ENCODE measurements at regions of chr2 and their contacts with region 1.

Region 1: DNA sequence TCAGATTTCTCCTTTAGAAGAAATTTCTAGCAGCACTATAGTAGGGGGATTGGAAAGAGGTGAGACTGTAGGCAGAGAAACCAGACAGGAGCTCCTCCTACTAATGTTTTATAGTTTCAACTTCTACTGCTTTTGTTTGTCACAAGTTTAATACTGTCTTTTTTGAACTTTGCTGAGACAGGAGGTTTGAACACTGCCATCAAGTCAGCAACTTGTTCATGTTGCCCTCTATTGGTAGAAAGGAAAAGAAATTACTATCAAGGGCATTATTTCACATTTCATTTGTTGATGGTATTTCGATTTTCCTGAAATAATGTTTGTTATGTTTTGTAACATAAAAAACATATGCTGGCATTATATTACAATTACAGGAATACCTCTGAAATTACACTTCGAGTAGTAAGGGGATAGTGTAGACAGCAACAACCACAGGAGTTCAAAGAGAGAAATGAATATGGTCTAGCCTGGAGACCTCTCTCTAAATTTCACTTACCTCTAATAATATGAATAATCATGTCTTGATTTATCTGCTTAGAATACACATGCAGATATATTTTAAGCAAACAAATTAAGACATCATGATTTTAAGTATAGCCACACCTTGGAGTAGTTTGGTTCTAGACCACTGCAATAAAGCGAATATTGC is 12.4 kb upstream of the CCDC88A start:
- DNase-seq: no peak
- H3K4me3 ChIP-seq: no peak overlapping the region
- H3K4me3 Mint-ChIP-seq: no peak overlapping the region
- H3K27ac Mint-ChIP-seq: no peak overlapping the region
- H3K4me1 ChIP-seq: no peaks in the 10 kb centered on the region
- H3K4me1 Mint-ChIP-seq: no peaks in the 10 kb centered on the region
- H3K27me3 ChIP-seq: no peaks in the 10 kb centered on the region
- H3K27me3 Mint-ChIP-seq: peaks cover 7% of the 10 kb centered on the region
- CTCF ChIP-seq: peak; percentile 43 to 53

Region 2: DNA sequence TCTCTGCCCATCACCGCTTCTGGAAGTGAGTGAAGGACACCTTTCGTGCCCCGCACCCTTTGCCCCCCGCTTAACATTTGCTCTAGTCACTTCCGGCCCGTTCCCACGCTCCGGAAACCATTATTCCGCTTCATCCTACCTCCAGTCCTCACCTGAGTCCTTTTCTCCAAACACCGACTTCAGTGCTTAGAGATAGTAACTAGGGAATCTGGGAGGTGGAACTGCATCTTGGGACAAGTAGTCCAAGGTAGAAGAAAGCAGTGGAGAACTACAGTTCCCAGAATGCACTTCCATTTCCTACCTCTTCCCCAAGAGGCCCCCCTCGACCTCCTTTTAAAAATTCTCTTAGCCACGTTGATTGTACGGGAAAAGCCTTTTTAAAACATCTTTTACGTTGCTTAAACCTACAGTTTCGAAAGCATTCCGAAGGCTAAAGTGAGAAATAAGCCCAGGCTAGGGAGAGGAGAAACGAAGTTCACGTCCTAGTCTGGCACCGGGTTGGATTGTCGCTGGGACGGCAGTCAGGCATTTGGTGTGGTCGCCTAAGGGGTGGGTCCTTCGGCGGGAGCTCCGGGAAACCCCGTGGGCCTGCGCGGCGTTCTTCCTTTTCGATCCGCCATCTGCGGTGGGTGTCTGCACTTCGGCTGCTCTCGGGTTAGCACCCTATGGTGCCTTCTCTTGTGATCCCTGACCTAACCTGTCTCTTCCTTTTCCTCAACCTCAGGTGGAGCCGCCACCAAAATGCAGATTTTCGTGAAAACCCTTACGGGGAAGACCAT is 199.8 kb before region 1 on chr2 and contains the starts of genes CLHC1 and RPS27A:
- CTCF ChIA-PET with region 1: no interaction called
- POLR2A ChIA-PET with region 1: no interaction called
- intact Hi-C with region 1: loop called (anchors 10 kb)
- DNase-seq: peak; percentile 93 to 97
- H3K4me3 ChIP-seq: peak within 1 kb of the TSS; percentile 96
- H3K4me3 Mint-ChIP-seq: peak within 1 kb of the TSS; percentile 85
- H3K27ac Mint-ChIP-seq: peak within 1 kb of the TSS; percentile 94
- H3K4me1 ChIP-seq: peaks cover 38% of the 10 kb centered on the region
- H3K4me1 Mint-ChIP-seq: peaks cover 36% of the 10 kb centered on the region
- H3K27me3 ChIP-seq: no peaks in the 10 kb centered on the region
- H3K27me3 Mint-ChIP-seq: no peaks in the 10 kb centered on the region
- CTCF ChIP-seq: no peak
- total RNA-seq, gene CLHC1: 12.6 and 13.4 TPM in 2 replicates
- total RNA-seq, gene RPS27A: 1,305 and 1,418 TPM in 2 replicates

Region 3: GRCh38 chr2:55502590-55503141 is 70.6 kb after region 1 on chr2:
- CTCF ChIA-PET with region 1: no interaction called
- POLR2A ChIA-PET with region 1: no interaction called
- intact Hi-C with region 1: no loop called
- DNase-seq: no peak
- H3K4me3 ChIP-seq: no peak overlapping the region
- H3K4me3 Mint-ChIP-seq: no peak overlapping the region
- H3K27ac Mint-ChIP-seq: no peak overlapping the region
- H3K4me1 ChIP-seq: no peaks in the 10 kb centered on the region
- H3K4me1 Mint-ChIP-seq: no peaks in the 10 kb centered on the region
- H3K27me3 ChIP-seq: no peaks in the 10 kb centered on the region
- H3K27me3 Mint-ChIP-seq: no peaks in the 10 kb centered on the region
- CTCF ChIP-seq: no peak

Measured in Caco-2 (cell line).